Activated naive CD4-positive, alpha-beta T cell treated with anti-CD3 and anti-CD28 coated beads, Interleukin-2, amount 10 ng/mL, durations not matched to agents 7 days and 5 days (primary cell): ENCODE measurements at regions of chr10 and their contacts with region 1.

Region 1: DNA sequence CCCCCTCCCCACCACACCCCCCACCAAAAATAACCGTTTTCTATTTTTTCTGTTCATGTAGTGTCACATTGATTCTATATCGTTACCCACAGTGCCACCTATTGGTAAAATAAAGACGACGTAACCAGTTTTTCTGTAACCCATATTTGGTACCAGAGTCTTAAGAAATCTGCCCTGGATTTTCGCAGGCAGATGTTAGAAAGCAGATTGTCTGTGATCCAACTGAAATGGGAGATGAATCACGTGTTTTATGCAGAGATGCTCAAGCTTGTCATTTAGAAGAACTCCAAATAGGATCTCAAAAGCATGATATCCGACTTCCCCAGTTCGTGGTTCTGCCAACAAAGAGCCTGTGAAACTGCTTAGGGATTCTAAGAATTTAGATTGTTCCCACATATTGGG is 261.1 kb upstream of the CSTF2T start:
- DNase-seq: no peak
- H3K4me3 Mint-ChIP-seq: no peak overlapping the region
- H3K27ac Mint-ChIP-seq: no peak overlapping the region
- H3K4me1 Mint-ChIP-seq: no peaks in the 10 kb centered on the region
- H3K27me3 Mint-ChIP-seq: peaks cover 7% of the 10 kb centered on the region

Region 2: DNA sequence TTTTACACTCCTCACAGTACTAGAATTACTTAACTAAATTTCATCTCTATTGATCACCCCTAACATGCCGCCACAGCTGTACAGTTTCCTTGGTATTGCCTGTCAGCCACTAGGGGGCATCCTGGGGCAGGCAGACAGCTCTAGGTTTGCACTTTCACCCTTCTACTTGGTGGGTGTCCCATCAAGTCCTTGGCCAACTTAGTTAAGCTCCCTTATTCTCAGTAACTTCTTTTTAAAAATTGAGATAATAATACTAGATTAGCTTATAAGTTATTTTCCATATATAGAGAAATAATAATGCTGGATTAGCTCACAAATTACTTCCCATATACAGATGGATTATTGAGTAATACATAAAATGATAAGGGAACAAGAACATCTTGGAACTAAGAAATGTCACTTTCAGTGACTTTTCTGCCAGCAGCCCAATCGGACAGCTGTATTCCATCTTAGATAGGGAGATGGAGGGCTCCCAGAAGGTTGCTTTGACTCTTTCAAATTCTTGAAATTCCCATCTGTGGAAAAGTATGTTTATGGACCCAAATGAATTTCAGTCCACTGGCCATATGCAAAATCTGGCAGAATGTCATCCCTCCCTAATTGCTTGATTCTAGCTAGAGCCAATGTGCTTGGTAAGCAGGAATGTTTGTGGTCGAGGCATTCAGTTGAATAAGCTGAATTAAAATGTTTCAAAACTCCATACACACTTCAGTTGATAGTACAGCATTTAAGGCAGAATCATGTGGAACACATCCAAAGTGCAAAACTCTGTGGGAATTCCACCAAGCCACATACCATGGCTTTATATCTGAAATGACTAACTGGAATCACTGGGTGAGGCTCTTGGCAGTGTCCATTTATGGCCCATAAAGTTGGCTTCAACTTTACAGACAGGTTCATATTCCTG is 570.8 kb before region 1 on chr10:
- CTCF ChIA-PET with region 1: interaction called, 34 read pairs
- DNase-seq: peak; percentile 61
- H3K4me3 Mint-ChIP-seq: no peak overlapping the region
- H3K27ac Mint-ChIP-seq: no peak overlapping the region
- H3K4me1 Mint-ChIP-seq: no peaks in the 10 kb centered on the region
- H3K27me3 Mint-ChIP-seq: no peaks in the 10 kb centered on the region

Region 3: DNA sequence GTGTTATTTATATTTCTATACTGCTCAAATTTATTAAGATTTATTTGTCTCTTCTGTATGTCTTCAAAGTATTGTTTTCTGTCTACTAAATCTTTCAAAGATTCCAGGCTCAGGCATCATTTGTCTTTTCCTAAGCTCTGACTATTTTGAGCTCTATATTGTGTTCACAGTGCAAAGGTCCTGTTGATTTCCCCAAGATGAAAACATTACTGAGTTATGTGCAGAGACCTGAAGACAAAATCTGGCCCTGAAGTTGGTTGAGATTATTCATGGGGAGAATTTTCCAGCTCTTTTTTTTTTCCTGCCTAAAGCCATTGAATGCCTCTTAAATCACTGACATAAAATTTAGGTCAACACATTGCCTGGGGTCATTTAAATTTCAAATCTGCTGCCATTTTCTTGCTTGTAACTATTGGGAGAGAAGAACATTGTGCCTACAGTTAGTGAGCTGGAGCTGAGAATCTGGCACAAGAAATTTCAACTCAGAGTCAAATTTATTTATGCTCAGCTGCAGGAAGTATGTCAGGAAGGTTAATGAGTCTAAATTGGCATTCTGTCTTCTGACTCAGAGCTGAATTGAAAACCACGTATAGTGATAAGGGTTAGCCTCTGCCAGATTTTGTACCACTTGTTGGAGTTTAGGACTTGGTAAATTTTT is 292.7 kb before region 1 on chr10:
- CTCF ChIA-PET with region 1: no interaction called
- DNase-seq: no peak
- H3K4me3 Mint-ChIP-seq: no peak overlapping the region
- H3K27ac Mint-ChIP-seq: no peak overlapping the region
- H3K4me1 Mint-ChIP-seq: no peaks in the 10 kb centered on the region
- H3K27me3 Mint-ChIP-seq: no peaks in the 10 kb centered on the region

Region 4: DNA sequence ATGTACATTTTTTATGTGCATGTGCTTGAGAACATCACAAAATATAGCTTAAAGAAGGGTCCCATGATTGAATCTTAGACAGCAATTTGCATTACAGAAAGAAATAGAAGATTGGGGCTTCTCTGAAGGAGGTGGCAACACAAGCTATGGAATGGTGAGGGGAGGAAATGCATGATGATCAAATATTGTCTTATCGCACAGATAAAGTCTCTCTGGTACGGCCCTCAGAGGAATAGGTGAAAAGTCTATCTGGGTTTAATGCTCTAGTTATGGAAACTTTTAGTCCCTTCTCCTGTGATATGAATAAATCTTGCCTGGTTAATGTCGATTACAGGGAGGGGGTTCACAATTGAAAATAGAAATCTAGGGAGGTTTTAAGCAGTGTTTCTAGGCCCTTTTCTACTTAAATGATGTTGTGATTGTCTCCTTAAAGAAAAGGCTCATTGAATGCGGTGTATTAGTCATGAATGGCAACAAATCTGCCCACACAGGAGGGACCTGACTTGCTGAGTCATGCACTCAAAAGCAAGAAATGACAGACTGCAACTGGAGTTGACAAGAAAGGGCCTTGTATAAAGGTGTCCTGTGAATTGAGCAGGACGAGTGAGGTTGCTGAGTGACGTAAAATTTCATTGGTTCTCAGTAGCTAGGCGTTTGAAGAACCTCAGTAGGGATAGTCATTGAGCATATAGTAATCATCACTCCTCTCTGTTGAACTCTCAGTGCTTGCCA is 127.7 kb before region 1 on chr10:
- CTCF ChIA-PET with region 1: no interaction called
- DNase-seq: no peak
- H3K4me3 Mint-ChIP-seq: no peak overlapping the region
- H3K27ac Mint-ChIP-seq: no peak overlapping the region
- H3K4me1 Mint-ChIP-seq: no peaks in the 10 kb centered on the region
- H3K27me3 Mint-ChIP-seq: no peaks in the 10 kb centered on the region